ENCODE measurements at regions of chr2 and their contacts with region 1.

Region 1: DNA sequence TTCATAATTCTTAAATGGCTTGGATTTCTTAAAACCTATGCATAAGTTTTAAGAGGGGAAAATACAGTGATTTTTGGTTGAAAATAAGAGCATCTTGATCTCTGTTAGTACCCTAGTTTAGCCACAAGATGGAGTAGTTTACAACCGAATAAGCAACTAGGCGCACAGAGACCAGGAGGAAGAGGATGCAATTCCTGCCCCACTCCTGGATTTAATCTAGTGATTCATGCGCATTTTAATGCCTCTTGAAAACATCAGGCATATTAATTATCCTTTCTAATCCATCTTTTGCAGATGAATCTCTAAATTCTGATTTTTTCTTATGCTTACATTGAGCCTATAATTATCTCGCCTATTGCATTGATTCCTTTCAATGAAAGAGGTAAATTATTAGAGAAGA is 76.7 kb downstream of the MRPS9 start:
- DNase-seq: peak in 2 of 9 experiments; percentile 47 to 60
- ATAC-seq: no peak
- H3K4me3 ChIP-seq: no peak overlapping the region
- H3K4me3 Mint-ChIP-seq: no peak overlapping the region
- H3K27ac ChIP-seq: no peak overlapping the region
- H3K27ac Mint-ChIP-seq: no peak overlapping the region
- H3K4me1 ChIP-seq: no peaks in the 10 kb centered on the region
- H3K4me1 Mint-ChIP-seq: no peaks in the 10 kb centered on the region
- H3K27me3 ChIP-seq: no peaks in the 10 kb centered on the region
- H3K27me3 Mint-ChIP-seq: no peaks in the 10 kb centered on the region
- CTCF ChIP-seq: peak; percentile 74

Region 2: DNA sequence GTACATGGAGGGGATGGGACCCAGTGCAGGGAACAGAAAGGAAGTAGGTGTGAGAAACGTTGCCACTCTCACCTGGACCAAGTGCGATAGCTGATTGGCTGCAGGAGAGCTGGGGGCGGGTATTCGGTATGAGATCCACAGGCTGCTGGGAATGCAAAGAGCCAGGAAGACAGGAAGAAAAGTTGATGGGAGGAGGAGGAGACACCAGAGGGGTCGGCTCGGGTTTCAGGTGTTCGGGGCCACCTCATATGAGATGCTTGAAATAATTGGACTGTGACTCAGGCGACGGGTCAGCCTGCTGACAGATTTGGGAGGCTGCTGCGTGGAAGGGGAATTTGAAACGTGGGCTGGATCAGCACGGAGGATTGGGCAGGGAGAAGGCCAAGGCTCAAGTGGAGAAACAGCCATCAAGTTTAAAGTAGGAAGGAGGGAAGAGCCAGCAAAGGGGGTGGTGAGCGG is 11.6 kb before region 1 on chr2:
- CTCF ChIA-PET with region 1: interaction called, 31 read pairs
- POLR2A ChIA-PET with region 1: no interaction called
- intact Hi-C with region 1: no loop called
- DNase-seq: no peak
- ATAC-seq: no peak
- H3K4me3 ChIP-seq: no peak overlapping the region
- H3K4me3 Mint-ChIP-seq: no peak overlapping the region
- H3K27ac ChIP-seq: no peak overlapping the region
- H3K27ac Mint-ChIP-seq: peak overlapping the region; percentile 11
- H3K4me1 ChIP-seq: no peaks in the 10 kb centered on the region
- H3K4me1 Mint-ChIP-seq: no peaks in the 10 kb centered on the region
- H3K27me3 ChIP-seq: no peaks in the 10 kb centered on the region
- H3K27me3 Mint-ChIP-seq: no peaks in the 10 kb centered on the region
- CTCF ChIP-seq: no peak

Region 3: DNA sequence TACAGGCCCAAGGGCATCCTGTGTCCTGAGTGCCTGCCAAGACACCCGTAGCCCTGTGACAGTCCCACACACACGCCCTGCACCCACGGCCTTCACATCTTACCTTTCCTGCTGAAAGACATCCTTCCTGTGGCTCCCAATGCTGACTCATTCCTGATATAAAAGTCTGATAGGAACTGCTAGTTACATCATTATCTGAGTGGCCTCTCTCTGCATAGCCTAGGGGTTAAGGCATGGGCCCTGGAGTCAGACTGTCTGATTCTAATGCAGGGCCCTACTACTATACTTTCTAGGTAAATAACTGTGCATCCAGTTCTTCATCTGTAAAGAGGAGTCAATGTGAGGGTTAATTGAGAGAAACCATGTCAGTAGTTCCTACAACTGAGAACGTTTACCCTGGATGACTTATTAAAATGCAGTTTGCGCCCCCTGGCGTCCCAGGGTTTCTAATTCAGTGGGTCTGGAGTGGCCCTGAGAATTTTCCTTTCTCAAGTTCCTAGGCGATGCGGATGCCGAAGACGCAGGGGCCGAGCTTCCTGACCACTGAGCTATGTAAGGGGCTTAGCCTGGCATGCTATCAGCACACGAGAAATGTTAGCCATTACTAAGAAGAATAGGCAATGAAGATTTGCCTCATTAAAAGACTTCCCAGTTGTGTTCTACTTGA is 121.0 kb after region 1 on chr2:
- CTCF ChIA-PET with region 1: interaction called, 125 read pairs
- POLR2A ChIA-PET with region 1: no interaction called
- intact Hi-C with region 1: loop called (anchors 1 kb)
- DNase-seq: peak; percentile 23 to 68 (median 58)
- ATAC-seq: no peak
- H3K4me3 ChIP-seq: no peak overlapping the region
- H3K4me3 Mint-ChIP-seq: no peak overlapping the region
- H3K27ac ChIP-seq: no peak overlapping the region
- H3K27ac Mint-ChIP-seq: no peak overlapping the region
- H3K4me1 ChIP-seq: no peaks in the 10 kb centered on the region
- H3K4me1 Mint-ChIP-seq: peaks cover 9% of the 10 kb centered on the region
- H3K27me3 ChIP-seq: no peaks in the 10 kb centered on the region
- H3K27me3 Mint-ChIP-seq: peaks cover 7% of the 10 kb centered on the region
- CTCF ChIP-seq: peak; percentile 66

Region 4: GRCh38 chr2:105521205-105521604 is 406.7 kb after region 1 on chr2:
- CTCF ChIA-PET with region 1: no interaction called
- POLR2A ChIA-PET with region 1: no interaction called
- intact Hi-C with region 1: loop called in 1 of 2 experiments (anchors 10 kb)
- DNase-seq: peak in 2 of 9 experiments; percentile 29 to 50
- ATAC-seq: no peak
- H3K4me3 ChIP-seq: no peak overlapping the region
- H3K4me3 Mint-ChIP-seq: no peak overlapping the region
- H3K27ac ChIP-seq: no peak overlapping the region
- H3K27ac Mint-ChIP-seq: no peak overlapping the region
- H3K4me1 ChIP-seq: no peaks in the 10 kb centered on the region
- H3K4me1 Mint-ChIP-seq: no peaks in the 10 kb centered on the region
- H3K27me3 ChIP-seq: no peaks in the 10 kb centered on the region
- H3K27me3 Mint-ChIP-seq: no peaks in the 10 kb centered on the region
- CTCF ChIP-seq: peak; percentile 74

Region 5: DNA sequence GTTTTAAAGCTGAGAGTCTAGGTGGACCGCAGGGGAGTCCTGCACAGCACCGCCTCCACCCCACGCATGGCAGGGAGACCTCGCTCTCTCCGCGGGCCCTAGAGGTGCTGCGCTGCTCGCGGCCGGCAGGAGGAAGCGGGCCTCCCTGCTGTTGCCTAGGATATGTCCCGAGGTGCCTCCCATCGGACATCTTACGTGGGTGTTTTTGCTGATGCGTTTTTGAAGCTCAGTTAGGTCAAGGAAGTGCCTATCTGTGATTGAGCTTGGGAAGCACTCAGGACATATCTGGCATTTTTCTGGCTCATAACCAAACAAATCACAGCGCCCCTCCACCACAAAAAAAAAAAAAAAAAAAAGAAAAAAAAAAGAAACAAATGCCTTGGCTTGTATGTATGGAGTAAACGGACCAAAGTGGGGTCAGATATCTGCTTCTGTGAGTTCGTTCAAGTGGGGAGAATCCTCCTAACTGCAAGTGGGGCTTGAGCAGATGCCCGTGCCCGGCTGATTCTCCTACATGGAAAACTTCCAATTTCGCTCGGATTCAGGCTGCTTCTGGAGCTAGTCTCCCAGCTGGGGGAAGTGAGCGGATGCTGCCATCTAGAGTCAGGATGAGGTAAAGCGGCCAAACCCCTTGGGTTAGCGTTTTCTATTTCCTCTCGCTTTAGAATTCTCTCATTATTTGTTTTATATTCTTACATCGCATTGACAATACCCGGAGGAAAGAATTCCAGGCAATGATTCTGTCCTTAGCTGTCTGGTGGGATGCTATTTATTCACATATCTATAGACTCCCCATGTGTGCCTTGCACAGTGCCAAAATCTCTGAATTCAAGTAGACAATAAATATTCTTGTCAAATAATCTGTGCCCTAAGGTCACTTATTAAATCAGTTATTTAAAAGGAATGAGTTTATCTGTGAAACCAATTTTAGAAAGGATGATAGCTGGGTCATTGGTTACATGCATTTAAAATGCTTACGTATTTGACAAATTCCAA is 1467.9 kb after region 1 on chr2:
- CTCF ChIA-PET with region 1: no interaction called
- POLR2A ChIA-PET with region 1: no interaction called
- intact Hi-C with region 1: loop called in 1 of 2 experiments (anchors 10 kb)
- DNase-seq: peak; percentile 26 to 74 (median 60)
- ATAC-seq: peak; percentile 83
- H3K4me3 ChIP-seq: peak overlapping the region; percentile 54 to 57
- H3K4me3 Mint-ChIP-seq: peak overlapping the region; percentile 91
- H3K27ac ChIP-seq: no peak overlapping the region
- H3K27ac Mint-ChIP-seq: no peak overlapping the region
- H3K4me1 ChIP-seq: peaks cover 5% of the 10 kb centered on the region
- H3K4me1 Mint-ChIP-seq: peaks cover 15% of the 10 kb centered on the region
- H3K27me3 ChIP-seq: peaks cover 0 to 4% of the 10 kb centered on the region in 2 experiments
- H3K27me3 Mint-ChIP-seq: peaks cover 44% of the 10 kb centered on the region
- CTCF ChIP-seq: peak; percentile 93